ENCODE measurements at regions of chr4 and their contacts with region 1.

Region 1: GRCh38 chr4:88528861-88529260 is 5.3 kb upstream of the PYURF start:
- DNase-seq: no peak
- H3K4me3 ChIP-seq: no peak overlapping the region
- H3K27ac ChIP-seq: no peak overlapping the region
- H3K4me1 ChIP-seq: peaks cover 0 to 12% of the 10 kb centered on the region in 2 donors
- H3K27me3 ChIP-seq: no peaks in the 10 kb centered on the region
- CTCF ChIP-seq: peak; percentile 17 to 24 (median 22)

Region 2: GRCh38 chr4:88659055-88659889 is 130.4 kb after region 1 on chr4:
- intact Hi-C with region 1: loop called (anchors 1 kb)
- DNase-seq: peak in 1 of 2 donors; percentile 78
- H3K4me3 ChIP-seq: no peak overlapping the region
- H3K27ac ChIP-seq: peak overlapping the region; percentile 32 to 61
- H3K4me1 ChIP-seq: peaks cover 0 to 14% of the 10 kb centered on the region in 2 donors
- H3K27me3 ChIP-seq: no peaks in the 10 kb centered on the region
- CTCF ChIP-seq: peak; percentile 61 to 90 (median 90)

Region 3: GRCh38 chr4:89024051-89024675 is 495.3 kb after region 1 on chr4:
- intact Hi-C with region 1: loop called (anchors 2 kb)
- DNase-seq: peak in 1 of 2 donors; percentile 77
- H3K4me3 ChIP-seq: no peak overlapping the region
- H3K27ac ChIP-seq: no peak overlapping the region
- H3K4me1 ChIP-seq: no peaks in the 10 kb centered on the region
- H3K27me3 ChIP-seq: no peaks in the 10 kb centered on the region
- CTCF ChIP-seq: peak; percentile 71 to 85 (median 81)

Measured in ascending aorta (tissue), 2 donors.